ENCODE measurements at regions of chr7 and their contacts with region 1.

Region 1: GRCh38 chr7:151244196-151244840 is 4.2 kb downstream of the SMARCD3 start:
- DNase-seq: peak; percentile 19
- H3K4me3 ChIP-seq: no peak overlapping the region
- H3K27ac ChIP-seq: no peak overlapping the region
- H3K4me1 ChIP-seq: peaks cover 14% of the 10 kb centered on the region
- H3K27me3 ChIP-seq: peaks cover 2% of the 10 kb centered on the region
- CTCF ChIP-seq: peak; percentile 79 to 88

Region 2: GRCh38 chr7:151123822-151124464 is 120.4 kb before region 1 on chr7:
- CTCF ChIA-PET with region 1: no interaction called
- dilution Hi-C with region 1: no loop called
- in situ Hi-C with region 1: no loop called
- intact Hi-C with region 1: loop called (anchors 2 kb)
- DNase-seq: peak; percentile 66
- H3K4me3 ChIP-seq: no peak overlapping the region
- H3K27ac ChIP-seq: no peak overlapping the region
- H3K4me1 ChIP-seq: no peaks in the 10 kb centered on the region
- H3K27me3 ChIP-seq: no peaks in the 10 kb centered on the region
- CTCF ChIP-seq: peak; percentile 99

Region 3: GRCh38 chr7:151226875-151227782 is 17.2 kb before region 1 on chr7 and contains the start of gene ABCF2:
- CTCF ChIA-PET with region 1: interaction called, 12 read pairs
- dilution Hi-C with region 1: no loop called
- in situ Hi-C with region 1: no loop called
- intact Hi-C with region 1: no loop called
- DNase-seq: peak; percentile 99
- H3K4me3 ChIP-seq: peak within 1 kb of the TSS; percentile 55 to 94 (median 88)
- H3K27ac ChIP-seq: peak within 1 kb of the TSS; percentile 27
- H3K4me1 ChIP-seq: peaks cover 22% of the 10 kb centered on the region
- H3K27me3 ChIP-seq: no peaks in the 10 kb centered on the region
- CTCF ChIP-seq: no peak
- total RNA-seq, gene ABCF2: 62.5 to 77.0 TPM